GM12878 (cell line): ENCODE measurements at regions of chr5 and their contacts with region 1.

Region 1: DNA sequence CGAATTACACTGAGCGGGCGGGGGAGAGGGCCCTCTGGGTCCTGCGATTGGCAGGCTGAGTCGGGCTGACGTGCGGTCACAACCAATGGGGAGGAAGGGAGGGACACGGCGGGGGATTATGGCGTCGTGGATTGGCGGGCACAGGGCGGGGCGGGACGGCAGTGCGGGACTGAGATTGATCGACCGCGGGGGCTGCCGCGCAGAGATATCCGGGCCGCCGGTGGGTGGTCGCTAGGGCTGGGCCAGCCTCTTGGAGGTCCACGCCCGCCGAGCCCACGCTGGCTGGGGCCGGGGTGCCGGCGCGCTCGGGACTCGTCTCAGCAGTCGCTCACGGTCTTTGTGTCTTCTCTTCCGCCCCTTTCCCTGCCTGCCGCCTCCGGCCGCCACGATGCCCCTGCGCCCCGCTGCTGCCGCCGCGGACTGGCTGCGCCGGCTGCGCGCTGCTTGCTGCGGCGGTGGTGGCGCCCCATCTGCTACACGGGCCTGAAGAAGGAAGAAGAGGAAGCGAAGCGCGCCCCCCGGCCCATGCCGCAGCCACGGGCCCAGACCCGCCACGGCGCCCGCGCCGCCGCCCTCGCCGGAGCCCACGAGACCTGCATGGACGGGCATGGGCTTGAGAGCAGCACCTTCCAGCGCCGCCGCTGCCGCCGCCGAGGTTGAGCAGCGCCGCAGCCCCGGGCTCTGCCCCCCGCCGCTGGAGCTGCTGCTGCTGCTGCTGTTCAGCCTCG is at the start of gene RGMB:
- DNase-seq: peak; percentile 85
- ATAC-seq: peak; percentile 89
- H3K4me3 ChIP-seq: peak within 1 kb of the TSS; percentile 93
- H3K27ac ChIP-seq: peak within 1 kb of the TSS; percentile 62
- H3K4me1 ChIP-seq: peaks cover 17% of the 10 kb centered on the region
- H3K27me3 ChIP-seq: peaks cover 2 to 5% of the 10 kb centered on the region in 2 experiments; a peak in 3 of 4 replicates
- CTCF ChIP-seq: no peak
- EP300 ChIP-seq: no peak
- POLR2A ChIP-seq: peak; percentile 86
- RAD21 ChIP-seq: no peak
- polyA plus RNA-seq, gene RGMB: 1.3 to 2.4 TPM

Region 2: DNA sequence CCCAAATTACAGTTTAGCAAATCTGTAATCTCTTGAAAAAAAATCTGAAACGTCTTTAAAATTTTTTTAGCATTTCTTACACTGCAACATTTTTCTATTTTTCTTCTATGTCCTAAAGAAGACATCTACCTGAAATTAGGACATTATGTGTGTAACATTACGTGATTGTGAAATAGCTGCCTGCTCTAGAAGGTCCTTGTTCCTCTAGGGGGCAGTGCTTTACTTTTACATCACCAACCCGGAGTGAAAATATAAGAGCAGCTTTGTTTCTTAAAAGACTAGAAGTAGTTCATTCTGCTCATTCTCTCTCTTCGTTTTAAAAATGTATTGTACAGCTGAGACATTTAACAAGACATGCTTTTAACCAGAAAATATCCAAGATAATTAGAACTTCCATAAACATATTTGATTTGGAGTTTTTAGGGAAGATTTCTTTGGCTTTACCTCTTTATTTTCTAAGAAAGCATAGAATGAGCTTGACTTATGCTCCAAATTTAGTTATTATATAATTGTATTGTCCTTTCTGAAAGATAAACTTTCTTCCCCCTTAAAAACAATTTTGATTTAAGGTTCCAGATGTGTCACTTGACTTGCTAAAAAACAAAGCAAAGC is 1542.5 kb before region 1 on chr5:
- CTCF ChIA-PET with region 1: interaction called, 21 read pairs
- POLR2A ChIA-PET with region 1: no interaction called
- RAD21 ChIA-PET with region 1: interaction called, 12 read pairs
- SMC1A ChIA-PET with region 1: interaction called, 3 read pairs
- in situ Hi-C with region 1: no loop called
- intact Hi-C with region 1: no loop called
- DNase-seq: peak; percentile 20
- ATAC-seq: peak; percentile 94
- H3K4me3 ChIP-seq: no peak overlapping the region
- H3K27ac ChIP-seq: no peak overlapping the region
- H3K4me1 ChIP-seq: no peaks in the 10 kb centered on the region
- H3K27me3 ChIP-seq: no peaks in the 10 kb centered on the region
- CTCF ChIP-seq: peak; percentile 61 to 76 (median 73)
- EP300 ChIP-seq: no peak
- POLR2A ChIP-seq: no peak
- RAD21 ChIP-seq: peak; percentile 83

Region 3: DNA sequence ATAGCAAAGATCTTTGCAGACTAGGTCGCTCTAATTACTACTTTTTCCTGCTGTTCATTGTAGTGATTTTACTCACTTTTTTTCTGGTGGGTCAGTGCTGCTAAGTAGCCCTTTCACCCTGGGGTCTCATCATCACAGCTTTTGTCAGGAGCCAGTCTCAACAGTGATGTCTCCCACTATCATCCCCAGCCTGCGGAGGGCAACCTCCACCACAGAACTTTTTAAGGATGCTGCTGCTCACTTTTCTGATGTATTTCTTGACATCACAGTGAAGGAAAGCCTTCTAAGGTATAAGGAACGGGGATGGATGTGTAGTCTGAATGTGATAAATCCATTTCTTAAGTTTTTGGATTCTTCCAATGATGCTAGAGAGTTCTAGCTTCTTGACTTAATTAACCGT is 1348.1 kb before region 1 on chr5:
- CTCF ChIA-PET with region 1: interaction called, 11 read pairs
- POLR2A ChIA-PET with region 1: no interaction called
- RAD21 ChIA-PET with region 1: interaction called, 3 read pairs
- SMC1A ChIA-PET with region 1: interaction called, 5 read pairs
- in situ Hi-C with region 1: no loop called
- intact Hi-C with region 1: no loop called
- DNase-seq: no peak
- ATAC-seq: peak; percentile 47; the same call in 2 of the 3 replicates
- H3K4me3 ChIP-seq: no peak overlapping the region
- H3K27ac ChIP-seq: no peak overlapping the region
- H3K4me1 ChIP-seq: no peaks in the 10 kb centered on the region
- H3K27me3 ChIP-seq: no peaks in the 10 kb centered on the region
- CTCF ChIP-seq: peak; percentile 34 to 51 (median 42)
- EP300 ChIP-seq: no peak
- POLR2A ChIP-seq: no peak
- RAD21 ChIP-seq: peak; percentile 82

Region 4: GRCh38 chr5:98556712-98557111 is 216.9 kb before region 1 on chr5:
- CTCF ChIA-PET with region 1: no interaction called
- POLR2A ChIA-PET with region 1: no interaction called
- RAD21 ChIA-PET with region 1: no interaction called
- SMC1A ChIA-PET with region 1: no interaction called
- in situ Hi-C with region 1: no loop called
- intact Hi-C with region 1: no loop called
- DNase-seq: no peak
- ATAC-seq: no peak
- H3K4me3 ChIP-seq: no peak overlapping the region
- H3K27ac ChIP-seq: no peak overlapping the region
- H3K4me1 ChIP-seq: no peaks in the 10 kb centered on the region
- H3K27me3 ChIP-seq: no peaks in the 10 kb centered on the region
- CTCF ChIP-seq: no peak
- EP300 ChIP-seq: no peak
- POLR2A ChIP-seq: no peak
- RAD21 ChIP-seq: no peak

Region 5: DNA sequence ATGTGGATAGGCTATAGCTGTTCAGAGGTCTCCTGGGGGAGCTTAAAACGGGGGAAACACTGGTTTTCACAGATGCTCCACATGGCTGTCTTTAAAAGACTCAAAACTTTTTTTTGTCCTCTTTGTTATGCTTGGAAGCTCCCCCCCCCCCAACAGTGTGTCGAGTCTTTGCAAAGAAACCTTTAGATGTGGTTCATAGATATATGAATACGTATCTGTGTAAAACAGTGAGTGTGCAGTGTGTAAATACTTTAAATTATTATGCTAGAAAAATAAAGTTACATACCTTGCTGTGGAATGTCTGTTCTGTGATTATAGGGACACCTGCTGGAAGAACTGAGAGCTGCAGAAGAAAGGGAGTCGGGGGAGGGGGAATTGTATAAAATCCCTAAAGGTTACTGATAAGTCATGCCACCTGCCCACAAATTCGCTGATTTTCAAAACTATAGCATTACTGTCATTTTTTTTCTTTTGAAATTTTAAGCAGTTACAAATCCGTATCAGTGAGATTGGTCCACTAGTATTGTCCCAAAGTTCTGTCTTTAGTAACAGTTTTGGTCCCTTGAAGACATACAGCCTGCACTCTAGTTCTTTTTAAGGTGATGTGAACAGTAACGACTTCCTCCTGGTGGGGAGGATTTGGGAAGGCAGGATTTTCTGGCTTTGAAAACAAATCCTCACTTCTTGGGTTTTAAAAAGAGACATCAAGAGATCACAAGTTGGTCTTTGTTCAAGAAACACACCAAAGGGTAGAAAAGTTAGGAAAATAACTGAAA is 22.8 kb after region 1 on chr5:
- CTCF ChIA-PET with region 1: interaction called, 104 read pairs
- POLR2A ChIA-PET with region 1: no interaction called
- RAD21 ChIA-PET with region 1: interaction called, 14 read pairs
- SMC1A ChIA-PET with region 1: interaction called, 24 read pairs
- in situ Hi-C with region 1: no loop called
- intact Hi-C with region 1: loop called (anchors 1 kb)
- DNase-seq: no peak
- ATAC-seq: peak; percentile 90
- H3K4me3 ChIP-seq: no peak overlapping the region
- H3K27ac ChIP-seq: no peak overlapping the region
- H3K4me1 ChIP-seq: no peaks in the 10 kb centered on the region
- H3K27me3 ChIP-seq: no peaks in the 10 kb centered on the region
- CTCF ChIP-seq: peak; percentile 70 to 80 (median 75)
- EP300 ChIP-seq: no peak
- POLR2A ChIP-seq: no peak
- RAD21 ChIP-seq: peak; percentile 89

Region 6: GRCh38 chr5:99122976-99123375 is 349.3 kb after region 1 on chr5:
- CTCF ChIA-PET with region 1: no interaction called
- POLR2A ChIA-PET with region 1: no interaction called
- RAD21 ChIA-PET with region 1: no interaction called
- SMC1A ChIA-PET with region 1: no interaction called
- in situ Hi-C with region 1: no loop called
- intact Hi-C with region 1: no loop called
- DNase-seq: no peak
- ATAC-seq: no peak
- H3K4me3 ChIP-seq: no peak overlapping the region
- H3K27ac ChIP-seq: no peak overlapping the region
- H3K4me1 ChIP-seq: no peaks in the 10 kb centered on the region
- H3K27me3 ChIP-seq: no peaks in the 10 kb centered on the region
- CTCF ChIP-seq: no peak
- EP300 ChIP-seq: no peak
- POLR2A ChIP-seq: no peak
- RAD21 ChIP-seq: no peak